SK-N-SH (cell line): ENCODE measurements at regions of chr2 and their contacts with region 1.

Region 1: GRCh38 chr2:72993147-72993932 is 76.0 kb downstream of the EMX1 start:
- DNase-seq: peak; percentile 85
- H3K4me3 ChIP-seq: no peak overlapping the region; a peak in 1 of 4 replicates
- H3K27ac ChIP-seq: no peak overlapping the region
- H3K4me1 ChIP-seq: peaks cover 0 to 14% of the 10 kb centered on the region in 2 experiments; a peak in 1 of 4 replicates
- H3K27me3 ChIP-seq: no peaks in the 10 kb centered on the region
- CTCF ChIP-seq: peak; percentile 82
- EP300 ChIP-seq: no peak
- RAD21 ChIP-seq: peak; percentile 58

Region 2: DNA sequence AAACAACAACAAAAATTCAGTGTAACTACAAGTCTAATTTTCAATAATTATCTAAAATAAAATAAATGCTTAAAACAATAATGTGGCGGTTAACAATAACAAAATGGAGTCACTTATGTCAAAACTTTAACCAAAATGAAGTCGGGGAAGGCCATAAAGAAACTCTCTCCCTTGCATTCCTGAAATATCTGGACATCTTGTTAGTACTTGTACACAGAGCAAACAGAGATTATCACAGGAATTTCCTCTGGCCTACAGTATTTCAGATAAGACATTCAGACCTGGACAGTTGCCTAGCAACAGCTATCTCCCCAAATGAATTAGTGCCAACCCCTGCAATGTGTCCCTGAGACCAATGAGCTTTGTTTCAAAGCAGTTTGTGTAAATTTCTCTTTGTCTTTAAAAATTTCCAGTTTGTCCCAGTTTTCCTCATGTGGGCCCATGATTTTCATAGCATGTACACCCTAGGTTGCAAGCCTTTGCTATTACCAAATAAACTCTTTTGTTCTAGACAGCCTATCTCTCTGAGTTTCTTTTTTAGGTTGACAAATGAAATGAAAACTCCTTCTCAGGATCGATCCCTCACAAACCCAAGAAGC is 236.1 kb before region 1 on chr2:
- CTCF ChIA-PET with region 1: no interaction called
- POLR2A ChIA-PET with region 1: no interaction called
- DNase-seq: peak; percentile 45
- H3K4me3 ChIP-seq: no peak overlapping the region
- H3K27ac ChIP-seq: no peak overlapping the region; a peak in 1 of 4 replicates
- H3K4me1 ChIP-seq: no peaks in the 10 kb centered on the region; a peak in 2 of 4 replicates
- H3K27me3 ChIP-seq: no peaks in the 10 kb centered on the region
- CTCF ChIP-seq: no peak
- EP300 ChIP-seq: peak in 1 of 2 experiments; percentile 56; a peak in 1 of 4 replicates
- RAD21 ChIP-seq: no peak

Region 3: GRCh38 chr2:72893594-72894319 is 99.6 kb before region 1 on chr2:
- CTCF ChIA-PET with region 1: interaction called, 14 read pairs
- POLR2A ChIA-PET with region 1: no interaction called
- DNase-seq: peak; percentile 79
- H3K4me3 ChIP-seq: no peak overlapping the region
- H3K27ac ChIP-seq: no peak overlapping the region
- H3K4me1 ChIP-seq: peaks cover 0 to 8% of the 10 kb centered on the region in 2 experiments; a peak in 1 of 4 replicates
- H3K27me3 ChIP-seq: no peaks in the 10 kb centered on the region; the same call in 1 of the 2 replicates
- CTCF ChIP-seq: peak; percentile 69
- EP300 ChIP-seq: no peak
- RAD21 ChIP-seq: peak; percentile 76

Region 4: GRCh38 chr2:73006969-73007710 is 13.8 kb after region 1 on chr2:
- CTCF ChIA-PET with region 1: interaction called, 14 read pairs
- POLR2A ChIA-PET with region 1: interaction called, 3 read pairs
- DNase-seq: no peak
- H3K4me3 ChIP-seq: no peak overlapping the region
- H3K27ac ChIP-seq: no peak overlapping the region
- H3K4me1 ChIP-seq: no peaks in the 10 kb centered on the region; a peak in 1 of 4 replicates
- H3K27me3 ChIP-seq: no peaks in the 10 kb centered on the region
- CTCF ChIP-seq: no peak
- EP300 ChIP-seq: no peak
- RAD21 ChIP-seq: no peak

Region 5: GRCh38 chr2:73163483-73164367 is 170.4 kb after region 1 on chr2:
- CTCF ChIA-PET with region 1: interaction called, 12 read pairs
- POLR2A ChIA-PET with region 1: interaction called, 4 read pairs
- DNase-seq: peak; percentile 88
- H3K4me3 ChIP-seq: no peak overlapping the region; a peak in 1 of 4 replicates
- H3K27ac ChIP-seq: no peak overlapping the region
- H3K4me1 ChIP-seq: no peaks in the 10 kb centered on the region
- H3K27me3 ChIP-seq: no peaks in the 10 kb centered on the region
- CTCF ChIP-seq: peak; percentile 87
- EP300 ChIP-seq: no peak
- RAD21 ChIP-seq: peak; percentile 90